ENCODE measurements at regions of chr2 and their contacts with region 1.

Region 1: DNA sequence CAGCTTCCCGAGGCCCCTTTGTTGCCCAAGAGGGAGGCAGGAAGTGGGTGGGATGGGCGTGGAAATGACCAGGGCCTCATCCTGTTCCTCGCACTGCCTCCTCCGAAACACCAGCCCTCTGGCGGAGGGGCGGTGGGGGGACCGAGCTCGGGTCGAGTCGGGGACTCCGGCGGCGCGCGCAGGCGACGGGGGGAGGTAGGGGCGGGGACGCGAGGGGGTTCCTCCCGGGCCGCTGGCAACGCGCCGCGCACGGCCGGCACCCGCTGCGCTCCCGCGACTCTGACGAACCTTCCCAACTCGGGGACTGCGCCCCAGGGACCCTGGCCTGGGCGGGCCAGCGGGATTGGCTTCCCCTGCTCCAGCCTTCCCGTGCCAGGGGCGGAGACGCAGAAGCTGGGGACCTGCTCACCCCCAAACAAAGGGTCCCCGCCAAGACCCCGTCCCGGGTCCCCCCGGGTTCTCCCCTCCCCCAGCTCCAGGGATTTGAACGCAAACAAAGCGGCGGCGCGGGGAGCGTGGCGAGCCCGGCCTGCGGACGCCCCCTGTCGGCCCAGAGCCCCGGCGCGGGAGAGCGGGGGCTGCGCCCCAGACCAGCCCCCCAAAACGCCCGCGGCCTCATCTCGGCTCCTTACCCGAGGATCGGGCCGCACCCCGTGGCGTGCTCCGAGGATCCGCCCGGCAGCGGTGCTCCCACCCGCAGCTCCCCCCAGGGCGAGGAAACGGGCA is 1.2 kb downstream of the SEMA4C start:
- DNase-seq: peak; percentile 87 to 89
- ATAC-seq: peak; percentile 81 to 90
- H3K4me3 ChIP-seq: peak overlapping the region; percentile 100
- H3K27ac ChIP-seq: peak overlapping the region; percentile 99 to 100
- H3K4me1 ChIP-seq: peaks cover 13% of the 10 kb centered on the region
- CTCF ChIP-seq: peak; percentile 77
- EP300 ChIP-seq: no peak
- POLR2A ChIP-seq: peak; percentile 77
- RAD21 ChIP-seq: peak in 1 of 2 experiments; percentile 51; a peak in 4 of 5 replicates

Region 2: GRCh38 chr2:96884320-96885094 is 15.8 kb after region 1 on chr2:
- CTCF ChIA-PET with region 1: interaction called, 28 read pairs
- POLR2A ChIA-PET with region 1: interaction called, 3 read pairs
- DNase-seq: no peak
- ATAC-seq: no peak
- H3K4me3 ChIP-seq: no peak overlapping the region
- H3K27ac ChIP-seq: no peak overlapping the region
- H3K4me1 ChIP-seq: no peaks in the 10 kb centered on the region
- CTCF ChIP-seq: no peak
- EP300 ChIP-seq: no peak
- POLR2A ChIP-seq: no peak
- RAD21 ChIP-seq: no peak

Region 3: DNA sequence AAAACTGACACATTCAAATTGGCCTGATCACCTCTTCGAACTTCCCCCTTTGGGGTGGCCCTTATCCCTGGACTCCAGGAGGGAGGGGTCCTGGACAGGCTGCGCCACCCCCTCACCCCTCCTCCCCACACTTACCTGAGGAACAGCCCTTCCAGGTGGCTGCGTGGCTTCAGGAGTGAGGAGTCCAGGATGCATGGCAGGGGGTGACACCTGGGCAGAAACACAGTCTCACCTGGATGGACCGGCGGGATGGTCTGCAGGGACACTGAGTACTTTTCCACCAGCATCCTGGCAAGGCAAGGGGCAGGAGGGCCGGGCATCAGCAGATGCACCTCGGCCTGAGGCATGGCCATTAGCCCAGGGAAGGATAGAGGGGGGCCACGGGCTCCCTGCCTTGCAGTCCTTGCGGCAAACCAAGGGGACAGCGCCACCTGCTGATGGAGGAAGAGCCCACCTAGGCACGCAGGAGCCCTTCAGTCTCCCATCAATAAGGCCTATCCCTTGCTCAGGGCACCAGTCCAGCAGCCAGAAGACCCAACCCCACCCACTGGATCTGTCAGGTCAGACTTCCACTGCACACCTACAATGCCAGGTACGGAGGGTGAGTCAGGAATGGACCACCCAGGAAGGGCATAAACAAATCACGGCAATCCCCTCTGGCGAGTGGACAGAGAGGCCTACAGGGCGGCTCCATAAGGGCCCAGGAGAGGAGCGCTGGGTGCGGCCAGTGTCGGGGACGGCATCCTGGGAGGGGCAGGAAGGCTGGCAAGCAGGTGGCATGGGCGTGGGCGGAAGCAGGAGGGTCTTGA is 91.6 kb after region 1 on chr2:
- CTCF ChIA-PET with region 1: interaction called, 13 read pairs
- POLR2A ChIA-PET with region 1: no interaction called
- DNase-seq: peak; percentile 80 to 82
- ATAC-seq: peak; percentile 97 to 100
- H3K4me3 ChIP-seq: no peak overlapping the region
- H3K27ac ChIP-seq: 0 out of 6 replicates have a peak overlapping the region, but pooled peaks of 1 of the 2 experiments have one; percentile 4
- H3K4me1 ChIP-seq: peaks cover 4% of the 10 kb centered on the region; the same call in 1 of the 3 replicates
- CTCF ChIP-seq: peak; percentile 81
- EP300 ChIP-seq: no peak
- POLR2A ChIP-seq: no peak
- RAD21 ChIP-seq: peak; percentile 86 to 90